ENCODE measurements at regions of chr12 and their contacts with region 1.

Region 1: DNA sequence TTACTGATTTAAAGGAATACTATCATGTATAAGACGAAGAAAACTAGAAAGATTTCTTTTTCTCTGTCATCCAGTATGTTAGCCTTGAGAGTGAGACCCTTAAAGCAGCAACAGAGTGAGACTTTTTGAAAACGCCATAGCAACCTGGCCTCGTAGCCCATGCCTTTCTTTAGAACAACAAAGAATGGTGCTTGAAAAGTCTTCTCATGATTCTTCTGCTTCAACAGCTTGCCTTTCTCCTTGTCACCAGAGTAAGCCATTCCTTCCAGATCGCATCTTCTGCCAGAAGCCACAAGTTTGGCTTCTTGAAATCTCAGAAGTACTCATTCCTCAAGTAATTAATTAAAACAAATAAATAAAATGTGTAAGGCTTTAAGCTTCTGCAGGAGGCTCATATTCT is 109.3 kb downstream of the PDE3A start:
- DNase-seq: no peak
- H3K4me3 ChIP-seq: no peak overlapping the region
- H3K27ac ChIP-seq: no peak overlapping the region
- H3K4me1 ChIP-seq: no peaks in the 10 kb centered on the region
- H3K27me3 ChIP-seq: no peaks in the 10 kb centered on the region
- CTCF ChIP-seq: no peak
- EP300 ChIP-seq: no peak
- POLR2A ChIP-seq: no peak
- RAD21 ChIP-seq: no peak

Region 2: DNA sequence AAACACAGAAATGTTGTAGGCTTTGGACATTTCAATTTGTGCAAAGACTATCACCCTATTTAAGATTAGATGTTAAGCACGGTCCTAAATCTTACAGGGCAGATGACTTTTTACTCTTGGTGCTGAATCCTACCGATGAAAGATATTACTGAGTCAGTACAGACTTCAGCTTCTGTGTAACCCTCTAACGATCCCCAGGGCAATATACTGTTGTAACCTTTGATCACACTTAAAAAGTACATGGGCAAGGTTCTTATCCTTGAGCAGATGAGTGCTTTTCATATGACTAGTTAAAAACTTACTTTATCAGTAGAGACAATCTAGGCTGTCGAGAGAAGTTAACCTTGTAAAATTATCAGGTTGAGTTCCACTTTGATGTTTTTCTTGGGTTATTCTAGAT is 86.8 kb before region 1 on chr12:
- CTCF ChIA-PET with region 1: no interaction called
- POLR2A ChIA-PET with region 1: no interaction called
- DNase-seq: no peak
- H3K4me3 ChIP-seq: no peak overlapping the region
- H3K27ac ChIP-seq: no peak overlapping the region
- H3K4me1 ChIP-seq: no peaks in the 10 kb centered on the region
- H3K27me3 ChIP-seq: no peaks in the 10 kb centered on the region
- CTCF ChIP-seq: no peak
- EP300 ChIP-seq: no peak
- POLR2A ChIP-seq: no peak
- RAD21 ChIP-seq: no peak

Region 3: GRCh38 chr12:20463913-20464524 is 13.7 kb before region 1 on chr12:
- CTCF ChIA-PET with region 1: interaction called, 15 read pairs
- POLR2A ChIA-PET with region 1: no interaction called
- DNase-seq: no peak
- H3K4me3 ChIP-seq: no peak overlapping the region
- H3K27ac ChIP-seq: no peak overlapping the region
- H3K4me1 ChIP-seq: no peaks in the 10 kb centered on the region
- H3K27me3 ChIP-seq: no peaks in the 10 kb centered on the region
- CTCF ChIP-seq: peak in 2 of 3 experiments; percentile 25 to 57; a peak in 2 of 4 replicates
- EP300 ChIP-seq: no peak
- POLR2A ChIP-seq: no peak
- RAD21 ChIP-seq: peak; percentile 29 to 38